ENCODE measurements at regions of chr6 and their contacts with region 1.

Region 1: GRCh38 chr6:34986845-34987246 is 97.8 kb downstream of the ANKS1A start:
- DNase-seq: peak; percentile 90
- H3K4me3 ChIP-seq: no peak overlapping the region
- H3K27ac ChIP-seq: no peak overlapping the region
- H3K4me1 ChIP-seq: peaks cover 14% of the 10 kb centered on the region
- H3K27me3 ChIP-seq: no peaks in the 10 kb centered on the region

Region 2: GRCh38 chr6:35240840-35241801 is 254.3 kb after region 1 on chr6:
- in situ Hi-C with region 1: loop called (anchors 10 kb)
- DNase-seq: peak; percentile 63
- H3K4me3 ChIP-seq: no peak overlapping the region
- H3K27ac ChIP-seq: no peak overlapping the region
- H3K4me1 ChIP-seq: no peaks in the 10 kb centered on the region
- H3K27me3 ChIP-seq: no peaks in the 10 kb centered on the region

Region 3: DNA sequence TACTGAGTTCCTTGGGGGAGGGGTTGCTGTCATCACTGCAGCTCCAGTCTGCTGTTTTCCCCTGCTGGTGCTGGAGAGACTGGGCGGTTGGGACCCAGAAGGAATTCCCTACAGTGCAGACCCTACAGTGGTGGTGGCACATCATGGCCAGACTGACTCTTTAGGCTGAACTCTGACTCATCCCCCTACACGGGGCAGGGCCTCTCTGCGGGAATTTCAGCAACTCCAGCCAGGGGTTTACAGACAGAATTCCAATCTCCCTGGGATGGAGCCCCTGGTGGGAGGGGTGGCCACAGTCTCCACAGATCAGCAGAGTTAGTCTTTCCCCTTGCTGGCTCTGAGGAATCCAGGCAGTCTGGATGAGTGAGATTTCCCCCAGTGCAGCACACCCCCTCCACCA is 1096.6 kb after region 1 on chr6:
- in situ Hi-C with region 1: no loop called
- DNase-seq: no peak
- H3K4me3 ChIP-seq: no peak overlapping the region
- H3K27ac ChIP-seq: no peak overlapping the region
- H3K4me1 ChIP-seq: no peaks in the 10 kb centered on the region
- H3K27me3 ChIP-seq: no peaks in the 10 kb centered on the region

Measured in GM23248 (cell line).